A549 (cell line): ENCODE measurements at regions of chr5 and their contacts with region 1.

Region 1: GRCh38 chr5:10283927-10284635 is 23.6 kb downstream of the CMBL start:
- DNase-seq: peak; percentile 82 to 85
- ATAC-seq: peak; percentile 99
- H3K4me3 ChIP-seq: no peak overlapping the region
- H3K27ac ChIP-seq: no peak overlapping the region
- H3K4me1 ChIP-seq: peaks cover 5% of the 10 kb centered on the region; the same call in 1 of the 3 replicates
- CTCF ChIP-seq: peak; percentile 87
- EP300 ChIP-seq: no peak
- POLR2A ChIP-seq: no peak
- RAD21 ChIP-seq: peak; percentile 87 to 89

Region 2: DNA sequence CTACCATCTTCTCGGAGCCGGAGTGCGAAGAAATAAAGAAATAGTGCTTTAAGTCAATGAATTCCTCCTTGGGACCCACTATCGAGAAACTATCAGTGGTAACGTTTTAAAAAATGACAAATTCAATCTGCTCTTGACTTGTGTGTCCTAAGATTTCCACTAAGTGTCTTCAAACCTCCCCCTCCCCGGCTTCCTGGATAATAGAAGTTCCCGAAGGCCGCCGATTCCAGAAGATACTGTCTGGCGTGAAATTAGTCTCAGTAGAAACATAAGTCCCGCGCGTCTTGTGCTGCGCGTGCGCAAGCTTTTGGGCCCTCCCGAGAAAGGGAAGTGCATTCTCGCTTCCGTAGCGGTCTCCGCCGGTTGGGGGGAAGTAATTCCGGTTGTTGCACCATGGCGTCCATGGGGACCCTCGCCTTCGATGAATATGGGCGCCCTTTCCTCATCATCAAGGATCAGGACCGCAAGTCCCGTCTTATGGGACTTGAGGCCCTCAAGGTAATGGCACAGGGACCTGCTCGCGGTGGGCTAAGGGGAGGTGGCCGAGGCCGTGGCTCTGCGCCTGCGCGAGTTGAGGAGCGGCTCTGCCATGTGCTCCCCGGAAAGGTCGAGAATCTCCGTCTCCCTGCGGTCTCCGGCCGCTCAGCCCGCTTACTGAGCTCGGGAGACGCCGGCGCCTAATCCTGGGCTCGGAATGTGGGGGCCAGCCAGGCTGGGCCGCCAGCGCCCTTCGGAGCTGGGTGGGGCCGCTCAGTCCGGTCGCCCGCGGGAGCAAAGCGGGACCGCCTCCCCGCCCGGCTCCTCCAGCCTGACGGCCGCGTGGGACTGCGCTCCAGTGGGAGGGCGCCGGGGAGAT is 33.9 kb before region 1 on chr5 and contains the start of gene CCT5:
- CTCF ChIA-PET with region 1: interaction called, 10 read pairs
- POLR2A ChIA-PET with region 1: interaction called, 3 read pairs
- DNase-seq: peak; percentile 95 to 99
- ATAC-seq: peak; percentile 86 to 88
- H3K4me3 ChIP-seq: peak within 1 kb of the TSS; percentile 87
- H3K27ac ChIP-seq: peak within 1 kb of the TSS; percentile 88 to 98
- H3K4me1 ChIP-seq: peaks cover 31% of the 10 kb centered on the region
- CTCF ChIP-seq: no peak
- EP300 ChIP-seq: no peak; a peak in 1 of 5 replicates
- POLR2A ChIP-seq: peak; percentile 89
- RAD21 ChIP-seq: no peak
- polyA plus RNA-seq, gene CCT5: 569 and 730 TPM in 2 replicates

Region 3: GRCh38 chr5:10268100-10268499 is 16.0 kb before region 1 on chr5:
- CTCF ChIA-PET with region 1: interaction called, 13 read pairs
- POLR2A ChIA-PET with region 1: no interaction called
- DNase-seq: no peak
- ATAC-seq: peak in 1 of 2 experiments; percentile 6; a peak in 2 of 6 replicates
- H3K4me3 ChIP-seq: no peak overlapping the region
- H3K27ac ChIP-seq: no peak overlapping the region
- H3K4me1 ChIP-seq: peaks cover 11% of the 10 kb centered on the region
- CTCF ChIP-seq: no peak
- EP300 ChIP-seq: no peak
- POLR2A ChIP-seq: no peak
- RAD21 ChIP-seq: no peak

Region 4: GRCh38 chr5:10310066-10310779 is 26.1 kb after region 1 on chr5:
- CTCF ChIA-PET with region 1: interaction called, 11 read pairs
- POLR2A ChIA-PET with region 1: no interaction called
- DNase-seq: peak; percentile 62 to 71
- ATAC-seq: peak; percentile 74 to 78
- H3K4me3 ChIP-seq: no peak overlapping the region
- H3K27ac ChIP-seq: peak overlapping the region; percentile 42 to 73
- H3K4me1 ChIP-seq: peaks cover 24% of the 10 kb centered on the region
- CTCF ChIP-seq: no peak
- EP300 ChIP-seq: no peak
- POLR2A ChIP-seq: no peak
- RAD21 ChIP-seq: no peak

Region 5: GRCh38 chr5:10353241-10354047 is 69.4 kb after region 1 on chr5 and contains the start of gene MARCHF6:
- CTCF ChIA-PET with region 1: interaction called, 22 read pairs
- POLR2A ChIA-PET with region 1: interaction called, 13 read pairs
- DNase-seq: peak; percentile 70 to 93
- ATAC-seq: peak; percentile 91 to 94
- H3K4me3 ChIP-seq: peak within 1 kb of the TSS; percentile 91
- H3K27ac ChIP-seq: peak within 1 kb of the TSS; percentile 97 to 99
- H3K4me1 ChIP-seq: peaks cover 30% of the 10 kb centered on the region
- CTCF ChIP-seq: no peak
- EP300 ChIP-seq: no peak
- POLR2A ChIP-seq: peak; percentile 97
- RAD21 ChIP-seq: 0 out of 5 replicates have a peak, but pooled peaks of 1 of the 2 experiments have one; percentile 10
- polyA plus RNA-seq, gene MARCHF6: 104 and 119 TPM in 2 replicates

Region 6: DNA sequence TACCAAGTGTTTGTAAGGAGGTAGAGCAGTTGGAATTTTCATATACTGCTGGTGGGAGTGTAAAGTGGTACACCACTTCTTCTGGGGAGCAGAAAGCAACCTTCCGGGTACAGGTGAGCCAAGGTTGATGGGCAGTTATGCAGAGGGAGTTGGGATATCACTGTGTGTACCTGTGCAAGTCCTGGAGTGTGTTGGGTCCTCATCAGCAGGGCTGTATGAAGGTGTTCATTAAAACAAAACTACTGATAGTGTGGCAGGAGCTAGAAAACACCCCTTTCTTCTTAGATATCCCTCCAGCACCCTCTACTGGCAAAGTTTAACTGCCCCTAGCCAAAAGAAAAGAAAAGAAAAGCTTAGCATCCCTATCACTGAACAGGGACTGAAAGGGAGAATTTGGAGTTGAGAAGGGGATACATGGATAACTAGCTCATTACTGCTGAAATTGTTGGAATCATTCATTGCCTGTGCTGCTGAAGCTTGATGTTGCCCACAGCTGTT is 80.2 kb after region 1 on chr5:
- CTCF ChIA-PET with region 1: interaction called, 22 read pairs
- POLR2A ChIA-PET with region 1: no interaction called
- DNase-seq: peak in 1 of 2 experiments; percentile 33
- ATAC-seq: peak; percentile 43 to 58; a peak in 4 of 6 replicates
- H3K4me3 ChIP-seq: no peak overlapping the region
- H3K27ac ChIP-seq: no peak overlapping the region
- H3K4me1 ChIP-seq: peaks cover 22% of the 10 kb centered on the region
- CTCF ChIP-seq: peak; percentile 35
- EP300 ChIP-seq: no peak
- POLR2A ChIP-seq: no peak
- RAD21 ChIP-seq: peak; percentile 18 to 29; a peak in 2 of 5 replicates

Region 7: GRCh38 chr5:10424124-10424731 is 140.1 kb after region 1 on chr5:
- CTCF ChIA-PET with region 1: interaction called, 65 read pairs
- POLR2A ChIA-PET with region 1: no interaction called
- DNase-seq: peak; percentile 46 to 59
- ATAC-seq: peak; percentile 87 to 91
- H3K4me3 ChIP-seq: no peak overlapping the region
- H3K27ac ChIP-seq: no peak overlapping the region
- H3K4me1 ChIP-seq: peaks cover 21% of the 10 kb centered on the region
- CTCF ChIP-seq: peak; percentile 66
- EP300 ChIP-seq: no peak
- POLR2A ChIP-seq: no peak
- RAD21 ChIP-seq: peak; percentile 69